GM12878 (cell line): ENCODE measurements at regions of chr6 and their contacts with region 1.

Region 1: DNA sequence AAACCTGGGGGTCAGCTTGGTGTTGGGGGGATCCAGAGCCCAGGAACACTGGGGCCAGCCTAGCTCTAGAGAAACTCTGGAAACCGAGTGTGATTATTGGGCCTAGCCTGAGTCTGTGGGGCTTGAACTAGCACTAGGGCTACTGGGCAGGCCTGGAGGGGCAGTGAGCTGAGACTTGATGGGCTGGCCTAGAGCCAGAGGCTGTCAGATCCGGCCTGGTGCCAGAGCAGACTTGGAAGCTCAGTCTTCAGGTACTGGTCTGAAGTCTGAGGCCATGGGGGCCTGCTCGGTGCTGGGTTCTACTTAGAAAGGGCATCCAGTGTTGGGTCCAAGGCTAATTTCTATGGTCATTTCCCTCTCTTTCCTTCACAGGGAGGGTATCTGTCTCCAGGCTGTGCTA is 2.7 kb downstream of the DEFB112 start:
- DNase-seq: no peak
- ATAC-seq: no peak
- H3K4me3 ChIP-seq: no peak overlapping the region
- H3K27ac ChIP-seq: no peak overlapping the region
- H3K4me1 ChIP-seq: no peaks in the 10 kb centered on the region
- H3K27me3 ChIP-seq: no peaks in the 10 kb centered on the region
- CTCF ChIP-seq: no peak
- EP300 ChIP-seq: no peak
- POLR2A ChIP-seq: no peak
- RAD21 ChIP-seq: no peak

Region 2: DNA sequence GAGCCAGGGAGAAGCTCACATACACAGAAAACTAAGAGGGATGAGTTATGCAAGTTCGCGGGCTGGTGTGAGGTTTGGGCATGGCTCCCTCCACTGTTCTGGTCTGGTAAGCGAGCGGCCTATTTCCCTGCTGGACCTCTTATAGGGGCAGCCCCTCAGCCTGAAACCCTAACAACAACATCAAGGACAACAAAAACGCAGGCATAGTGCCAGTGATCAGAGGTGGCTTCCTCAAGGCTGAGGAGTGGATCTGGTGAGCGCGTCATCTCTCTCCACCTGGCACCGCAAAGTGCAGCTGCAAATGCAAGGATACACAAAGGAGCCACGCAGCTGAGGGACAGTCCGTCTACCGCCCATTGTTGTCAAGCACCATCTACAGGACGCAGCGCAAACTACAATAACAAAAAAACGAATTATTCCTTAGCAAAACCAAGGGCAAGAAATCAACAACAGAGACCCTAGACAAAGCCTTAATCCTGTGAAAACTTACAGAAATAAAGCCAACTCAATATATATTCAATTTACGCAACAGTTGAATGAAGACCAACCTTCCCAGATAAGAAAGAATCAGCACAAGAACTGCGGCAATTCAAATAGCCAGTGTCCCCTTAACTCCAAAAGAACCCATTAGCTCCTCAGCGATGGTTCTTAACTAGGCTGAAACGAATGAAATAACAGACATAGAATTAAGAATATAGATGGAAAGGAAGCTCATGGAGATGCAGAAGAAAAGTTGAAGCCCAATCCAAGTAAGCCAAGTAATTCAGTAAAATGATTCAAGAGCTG is 16.1 kb before region 1 on chr6:
- CTCF ChIA-PET with region 1: interaction called, 14 read pairs
- POLR2A ChIA-PET with region 1: no interaction called
- RAD21 ChIA-PET with region 1: no interaction called
- SMC1A ChIA-PET with region 1: interaction called, 3 read pairs
- in situ Hi-C with region 1: no loop called
- intact Hi-C with region 1: no loop called
- DNase-seq: no peak
- ATAC-seq: peak; percentile 75
- H3K4me3 ChIP-seq: no peak overlapping the region
- H3K27ac ChIP-seq: no peak overlapping the region
- H3K4me1 ChIP-seq: no peaks in the 10 kb centered on the region
- H3K27me3 ChIP-seq: no peaks in the 10 kb centered on the region
- CTCF ChIP-seq: peak; percentile 30 to 47 (median 35); a peak in 5 of 6 replicates
- EP300 ChIP-seq: no peak
- POLR2A ChIP-seq: no peak
- RAD21 ChIP-seq: peak; percentile 59

Region 3: GRCh38 chr6:50097966-50098640 is 51.1 kb after region 1 on chr6:
- CTCF ChIA-PET with region 1: no interaction called
- POLR2A ChIA-PET with region 1: no interaction called
- RAD21 ChIA-PET with region 1: no interaction called
- SMC1A ChIA-PET with region 1: no interaction called
- in situ Hi-C with region 1: no loop called
- intact Hi-C with region 1: no loop called
- DNase-seq: no peak
- ATAC-seq: no peak
- H3K4me3 ChIP-seq: no peak overlapping the region
- H3K27ac ChIP-seq: no peak overlapping the region
- H3K4me1 ChIP-seq: no peaks in the 10 kb centered on the region
- H3K27me3 ChIP-seq: no peaks in the 10 kb centered on the region; a peak in 1 of 4 replicates
- CTCF ChIP-seq: no peak
- EP300 ChIP-seq: no peak
- POLR2A ChIP-seq: no peak
- RAD21 ChIP-seq: no peak

Region 4: DNA sequence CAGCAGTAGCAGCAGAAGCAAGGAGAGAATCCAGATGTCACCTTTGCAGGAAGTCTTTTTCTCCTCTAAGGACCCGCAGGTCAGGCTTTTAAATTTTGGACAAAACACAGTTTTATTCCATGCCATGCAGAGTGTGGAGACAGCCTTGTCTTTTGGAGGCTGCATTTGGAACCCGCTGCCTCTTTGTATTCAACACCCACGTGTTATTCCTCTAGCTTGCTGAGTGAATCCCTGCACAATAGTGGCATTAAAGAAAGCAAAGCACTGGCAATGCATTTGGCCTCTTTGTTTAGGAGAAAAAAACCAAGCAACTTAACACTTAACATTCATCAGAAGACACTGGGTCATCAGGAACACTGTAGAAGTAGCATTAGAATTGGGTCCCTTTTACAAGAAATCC is 815.1 kb after region 1 on chr6:
- CTCF ChIA-PET with region 1: no interaction called
- POLR2A ChIA-PET with region 1: no interaction called
- RAD21 ChIA-PET with region 1: no interaction called
- SMC1A ChIA-PET with region 1: no interaction called
- in situ Hi-C with region 1: no loop called
- intact Hi-C with region 1: no loop called
- DNase-seq: no peak
- ATAC-seq: no peak
- H3K4me3 ChIP-seq: no peak overlapping the region
- H3K27ac ChIP-seq: no peak overlapping the region
- H3K4me1 ChIP-seq: no peaks in the 10 kb centered on the region
- H3K27me3 ChIP-seq: no peaks in the 10 kb centered on the region
- CTCF ChIP-seq: no peak
- EP300 ChIP-seq: no peak
- POLR2A ChIP-seq: no peak
- RAD21 ChIP-seq: no peak